Lower leg skin (tissue), 4 donors: ENCODE measurements at regions of chr11 and their contacts with region 1.

Region 1: DNA sequence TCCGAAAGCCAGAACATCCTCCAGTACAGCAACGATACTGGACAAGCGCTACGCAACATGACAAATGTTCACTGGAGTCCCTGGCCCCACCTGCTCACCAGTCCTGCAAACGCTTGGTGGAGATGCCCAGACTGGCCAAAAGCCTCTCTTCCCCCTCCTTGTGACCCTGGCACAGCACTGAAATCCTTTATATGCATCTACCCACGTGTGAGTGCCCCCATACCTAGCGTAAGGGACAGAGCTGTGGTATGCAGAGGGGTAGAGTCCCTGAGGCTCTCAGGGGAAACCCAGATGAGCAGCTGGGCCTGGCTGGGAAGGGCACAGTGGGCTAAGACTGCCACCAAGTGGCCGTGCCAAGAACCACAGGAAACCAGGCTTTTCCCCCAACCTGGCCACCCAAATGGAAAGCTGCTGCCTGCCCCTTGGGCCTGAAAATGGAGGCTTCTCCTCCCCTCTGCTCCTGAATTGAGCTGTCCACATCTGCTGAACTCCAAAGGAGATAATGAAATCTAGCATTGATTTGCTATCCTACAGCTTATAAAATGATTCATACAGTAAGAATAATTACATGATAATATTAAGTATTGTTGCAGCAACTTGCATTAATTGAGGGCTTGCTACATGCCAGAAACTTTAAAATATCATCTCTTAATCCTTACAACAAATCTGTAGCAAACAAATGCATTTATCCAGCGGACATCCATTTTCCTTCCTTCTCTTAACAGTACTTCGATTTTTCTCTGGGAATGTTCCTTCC is 24.8 kb upstream of the TTC12 start:
- DNase-seq: peak in 1 of 2 donors; percentile 22
- H3K4me3 ChIP-seq: no peak overlapping the region
- CTCF ChIP-seq: peak in 1 of 3 donors; percentile 13
- POLR2A ChIP-seq: no peak

Region 2: GRCh38 chr11:112219476-112220232 is 1070.0 kb before region 1 on chr11:
- intact Hi-C with region 1: loop called (anchors 10 kb)
- DNase-seq: peak in 1 of 2 donors; percentile 50
- H3K4me3 ChIP-seq: no peak overlapping the region
- CTCF ChIP-seq: peak in 1 of 3 donors; percentile 85
- POLR2A ChIP-seq: no peak

Region 3: GRCh38 chr11:112289588-112290492 is 999.8 kb before region 1 on chr11:
- intact Hi-C with region 1: loop called (anchors 10 kb)
- DNase-seq: peak; percentile 76 to 97
- H3K4me3 ChIP-seq: no peak overlapping the region
- CTCF ChIP-seq: peak in 1 of 3 donors; percentile 47
- POLR2A ChIP-seq: no peak

Region 4: GRCh38 chr11:112588252-112588694 is 701.3 kb before region 1 on chr11:
- intact Hi-C with region 1: loop called (anchors 5 kb)
- DNase-seq: peak in 1 of 2 donors; percentile 52
- H3K4me3 ChIP-seq: no peak overlapping the region
- CTCF ChIP-seq: no peak
- POLR2A ChIP-seq: no peak

Region 5: GRCh38 chr11:113603277-113604059 is 313.9 kb after region 1 on chr11:
- intact Hi-C with region 1: no loop called
- DNase-seq: no peak
- H3K4me3 ChIP-seq: no peak overlapping the region
- CTCF ChIP-seq: no peak
- POLR2A ChIP-seq: no peak